ENCODE measurements at regions of chr1 and their contacts with region 1.

Region 1: GRCh38 chr1:205709059-205709398 is 28.7 kb upstream of the SLC45A3 start:
- DNase-seq: no peak
- ATAC-seq: peak; percentile 15

Region 2: GRCh38 chr1:205591522-205592351 is 117.3 kb before region 1 on chr1:
- intact Hi-C with region 1: loop called (anchors 5 kb)
- DNase-seq: peak; percentile 91
- ATAC-seq: peak; percentile 97

Region 3: GRCh38 chr1:205664376-205665108 is 44.5 kb before region 1 on chr1:
- intact Hi-C with region 1: loop called (anchors 5 kb)
- DNase-seq: no peak
- ATAC-seq: no peak